ENCODE measurements at regions of chr6 and their contacts with region 1.

Region 1: GRCh38 chr6:140809694-140810101 is 1323.0 kb upstream of the GJE1 start:
- DNase-seq: no peak
- H3K4me3 Mint-ChIP-seq: no peak overlapping the region
- H3K27ac Mint-ChIP-seq: no peak overlapping the region
- H3K4me1 Mint-ChIP-seq: peaks cover 5% of the 10 kb centered on the region
- H3K27me3 Mint-ChIP-seq: peaks cover 3% of the 10 kb centered on the region

Region 2: GRCh38 chr6:140586426-140587061 is 223.2 kb before region 1 on chr6:
- CTCF ChIA-PET with region 1: no interaction called
- intact Hi-C with region 1: loop called (anchors 1 kb)
- DNase-seq: peak; percentile 24
- H3K4me3 Mint-ChIP-seq: no peak overlapping the region
- H3K27ac Mint-ChIP-seq: no peak overlapping the region
- H3K4me1 Mint-ChIP-seq: peaks cover 7% of the 10 kb centered on the region
- H3K27me3 Mint-ChIP-seq: peaks cover 5% of the 10 kb centered on the region

Region 3: DNA sequence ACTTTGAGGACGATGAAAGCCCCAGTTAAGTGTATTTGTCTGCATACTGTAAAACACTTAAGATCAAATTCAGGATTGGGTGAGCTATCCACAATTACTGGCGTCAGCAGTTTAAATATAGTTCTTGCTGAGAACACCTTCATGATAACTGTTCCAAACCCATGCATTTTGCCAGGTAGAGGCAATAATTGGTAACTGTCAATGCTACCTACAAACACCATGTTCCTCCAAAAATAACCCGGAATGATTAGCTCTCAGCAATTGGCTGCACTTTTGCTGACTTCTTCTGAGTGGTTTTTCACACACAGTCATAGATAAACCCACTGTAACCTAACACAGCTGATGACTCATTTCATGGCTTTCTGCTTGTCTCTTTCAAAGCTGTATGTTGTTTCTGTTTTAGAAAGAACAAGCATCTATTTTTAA is 35.6 kb before region 1 on chr6:
- CTCF ChIA-PET with region 1: no interaction called
- intact Hi-C with region 1: loop called (anchors 1 kb)
- DNase-seq: no peak
- H3K4me3 Mint-ChIP-seq: no peak overlapping the region
- H3K27ac Mint-ChIP-seq: no peak overlapping the region
- H3K4me1 Mint-ChIP-seq: no peaks in the 10 kb centered on the region
- H3K27me3 Mint-ChIP-seq: peaks cover 18% of the 10 kb centered on the region

Region 4: DNA sequence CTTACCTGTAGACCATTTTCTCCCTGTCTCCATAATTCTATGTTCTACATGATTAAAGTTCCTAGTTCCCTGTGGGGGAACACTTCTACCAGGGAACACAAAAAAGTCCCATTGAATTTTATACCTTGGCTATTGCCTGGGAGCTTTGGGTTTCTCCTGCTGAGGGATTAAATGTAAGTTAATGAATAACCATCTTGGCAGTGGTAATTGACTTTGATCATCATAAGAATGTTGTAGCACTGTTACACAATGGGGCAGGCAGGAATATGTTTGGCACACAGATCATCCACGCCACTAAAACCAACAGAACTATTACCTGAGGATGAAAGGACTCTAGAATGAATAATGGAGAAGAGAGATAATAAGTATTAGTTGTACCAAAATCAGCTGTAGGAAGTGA is 216.8 kb after region 1 on chr6:
- CTCF ChIA-PET with region 1: no interaction called
- intact Hi-C with region 1: no loop called
- DNase-seq: no peak
- H3K4me3 Mint-ChIP-seq: no peak overlapping the region
- H3K27ac Mint-ChIP-seq: no peak overlapping the region
- H3K4me1 Mint-ChIP-seq: no peaks in the 10 kb centered on the region
- H3K27me3 Mint-ChIP-seq: no peaks in the 10 kb centered on the region

Region 5: GRCh38 chr6:142146828-142147662 is 1337.3 kb after region 1 on chr6 and contains the starts of genes NMBR and VTA1:
- CTCF ChIA-PET with region 1: no interaction called
- intact Hi-C with region 1: no loop called
- DNase-seq: peak; percentile 98
- H3K4me3 Mint-ChIP-seq: peak within 1 kb of the TSS; percentile 93
- H3K27ac Mint-ChIP-seq: peak within 1 kb of the TSS; percentile 91
- H3K4me1 Mint-ChIP-seq: peaks cover 53% of the 10 kb centered on the region
- H3K27me3 Mint-ChIP-seq: no peaks in the 10 kb centered on the region
- total RNA-seq, gene NMBR: not detected
- total RNA-seq, gene VTA1: 54.7 to 57.3 TPM